ENCODE measurements at regions of chr21 and their contacts with region 1.

Region 1: DNA sequence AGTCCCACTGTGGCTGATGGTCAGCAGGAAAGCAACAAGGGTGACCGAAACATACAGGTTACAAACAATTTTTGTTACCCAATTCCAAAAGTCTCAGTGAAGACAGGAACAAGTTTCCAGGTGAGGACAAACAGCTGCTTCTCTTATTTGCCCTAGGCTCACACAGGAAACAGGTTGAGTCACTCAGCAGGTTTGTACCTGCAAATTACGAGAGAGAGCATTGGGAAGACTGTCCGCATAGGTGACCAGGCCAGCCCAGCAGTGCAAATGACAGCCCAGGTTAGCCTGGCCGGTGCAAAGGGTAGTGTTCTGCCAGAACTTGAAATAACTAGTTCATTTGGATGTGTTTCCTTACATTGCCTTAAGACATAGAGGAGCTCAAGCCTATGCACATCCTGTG is 40.0 kb upstream of the DSCAM start:
- DNase-seq: peak; percentile 93
- H3K4me3 ChIP-seq: peak overlapping the region in 1 of 3 experiments; percentile 2
- H3K27ac ChIP-seq: peak overlapping the region; percentile 55
- H3K4me1 ChIP-seq: peaks cover 35% of the 10 kb centered on the region
- H3K27me3 ChIP-seq: no peaks in the 10 kb centered on the region
- CTCF ChIP-seq: no peak

Region 2: GRCh38 chr21:40496116-40496515 is 390.8 kb before region 1 on chr21:
- CTCF ChIA-PET with region 1: no interaction called
- dilution Hi-C with region 1: no loop called
- in situ Hi-C with region 1: no loop called
- intact Hi-C with region 1: no loop called
- DNase-seq: no peak
- H3K4me3 ChIP-seq: no peak overlapping the region
- H3K27ac ChIP-seq: no peak overlapping the region
- H3K4me1 ChIP-seq: no peaks in the 10 kb centered on the region
- H3K27me3 ChIP-seq: no peaks in the 10 kb centered on the region
- CTCF ChIP-seq: no peak

Region 3: DNA sequence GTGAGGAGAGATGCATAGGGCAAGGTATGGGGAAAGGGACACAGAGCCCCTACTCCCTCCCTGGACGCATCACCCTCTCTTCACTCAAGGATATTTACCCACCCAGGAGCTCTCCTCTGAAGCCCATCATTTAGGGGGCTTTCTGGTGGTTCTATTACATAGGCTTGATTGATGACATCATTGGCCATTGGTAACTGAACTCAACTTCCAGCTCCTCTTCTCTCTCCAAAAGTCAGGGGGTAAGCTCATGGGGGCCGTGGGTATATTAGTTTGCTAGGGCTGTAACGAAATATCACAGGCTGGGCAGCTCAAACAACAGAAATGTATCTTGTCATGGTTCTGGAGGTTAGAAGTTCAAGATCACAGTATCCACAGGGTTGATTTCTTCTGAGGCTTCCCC is 150.8 kb before region 1 on chr21:
- CTCF ChIA-PET with region 1: no interaction called
- dilution Hi-C with region 1: no loop called
- in situ Hi-C with region 1: no loop called
- intact Hi-C with region 1: no loop called
- DNase-seq: no peak
- H3K4me3 ChIP-seq: no peak overlapping the region
- H3K27ac ChIP-seq: no peak overlapping the region
- H3K4me1 ChIP-seq: no peaks in the 10 kb centered on the region
- H3K27me3 ChIP-seq: no peaks in the 10 kb centered on the region
- CTCF ChIP-seq: no peak

Region 4: DNA sequence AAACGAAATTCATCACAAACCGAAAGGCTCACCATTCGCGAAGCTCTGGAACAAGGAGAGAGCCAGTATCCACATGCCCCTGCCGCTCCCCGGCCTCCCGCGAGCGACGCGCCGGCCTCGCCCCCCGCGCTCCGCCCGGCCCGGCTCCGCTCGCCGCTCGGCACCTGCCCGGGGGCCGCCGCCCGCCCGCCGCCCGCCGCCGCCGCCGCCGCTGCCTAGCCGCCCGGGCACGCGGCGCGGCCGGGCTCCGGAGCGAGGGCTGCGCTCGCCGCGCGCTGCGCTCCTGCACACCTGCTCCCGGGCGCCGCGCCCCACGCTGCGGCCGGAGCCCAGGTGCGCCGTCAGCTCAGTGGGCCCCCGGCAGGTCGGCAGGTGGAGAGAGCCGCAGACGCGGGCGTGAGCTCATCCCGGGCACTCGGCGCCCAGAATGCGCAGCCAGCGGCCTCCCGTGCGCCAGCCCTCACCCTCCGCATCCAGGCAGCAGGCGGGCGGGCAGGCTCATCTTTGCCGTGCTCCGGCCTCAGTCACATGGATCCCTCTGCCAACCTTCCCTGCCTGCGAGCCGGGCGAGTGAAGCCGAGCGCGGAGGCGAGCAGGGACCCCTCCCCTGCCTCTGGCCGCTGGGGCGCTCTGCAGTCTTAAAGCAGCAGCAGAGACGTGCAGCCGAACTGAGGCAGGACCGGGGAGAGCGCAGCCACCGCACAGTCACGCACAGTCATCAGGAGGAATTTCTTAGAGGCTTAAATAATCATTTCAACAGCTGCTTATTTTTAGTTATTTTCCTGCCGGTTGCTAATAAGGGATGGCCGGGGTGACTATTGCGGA is 40.1 kb before region 1 on chr21 and contains the start of gene DSCAM:
- CTCF ChIA-PET with region 1: no interaction called
- dilution Hi-C with region 1: no loop called
- in situ Hi-C with region 1: no loop called
- intact Hi-C with region 1: loop called (anchors 2 kb)
- DNase-seq: peak; percentile 50
- H3K4me3 ChIP-seq: peak within 1 kb of the TSS; percentile 47 to 78 (median 52)
- H3K27ac ChIP-seq: peak within 1 kb of the TSS; percentile 97
- H3K4me1 ChIP-seq: peaks cover 53% of the 10 kb centered on the region
- H3K27me3 ChIP-seq: no peaks in the 10 kb centered on the region
- CTCF ChIP-seq: no peak
- total RNA-seq, gene DSCAM: 4.7 to 8.1 TPM

Region 5: GRCh38 chr21:40923407-40923806 is 36.5 kb after region 1 on chr21:
- CTCF ChIA-PET with region 1: no interaction called
- dilution Hi-C with region 1: no loop called
- in situ Hi-C with region 1: no loop called
- intact Hi-C with region 1: loop called (anchors 5 kb)
- DNase-seq: peak; percentile 66
- H3K4me3 ChIP-seq: peak overlapping the region in 1 of 3 experiments; percentile 16
- H3K27ac ChIP-seq: peak overlapping the region; percentile 60
- H3K4me1 ChIP-seq: peaks cover 22% of the 10 kb centered on the region
- H3K27me3 ChIP-seq: no peaks in the 10 kb centered on the region
- CTCF ChIP-seq: no peak

Measured in mammary epithelial cell (primary cell).